PC-3 (cell line): ENCODE measurements at regions of chr2 and their contacts with region 1.

Region 1: DNA sequence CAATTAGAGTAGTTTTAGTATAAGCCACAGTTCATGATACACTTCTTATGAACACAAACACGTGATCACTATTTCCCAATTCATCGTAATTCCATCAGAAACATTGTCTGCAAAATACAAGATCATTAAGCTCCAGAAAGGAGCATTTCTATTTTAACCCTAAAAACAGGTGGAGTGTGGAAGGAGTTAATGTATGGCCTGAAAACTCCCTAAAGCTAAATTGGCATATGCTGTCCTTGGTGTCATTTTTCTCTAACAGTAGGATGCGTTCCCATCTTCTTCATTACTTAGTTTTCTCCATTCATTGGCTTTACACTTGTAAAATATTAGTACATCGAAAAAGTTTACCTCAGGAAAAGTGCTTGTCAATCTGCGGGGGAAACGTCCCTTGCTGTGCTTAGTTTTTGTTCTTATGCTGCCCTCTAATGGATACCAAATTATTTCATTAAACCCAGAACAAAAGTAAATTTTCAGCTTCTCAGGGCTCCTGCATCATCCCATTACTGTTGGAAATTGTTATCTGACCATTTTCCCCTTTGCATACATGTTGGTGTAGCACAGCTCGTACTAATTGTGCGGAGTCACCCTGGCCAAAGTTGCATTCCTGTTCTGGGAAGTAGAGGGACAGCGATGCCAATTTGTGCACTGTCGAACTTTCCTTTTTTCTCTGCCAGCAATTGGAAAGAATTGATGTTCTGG is 153.4 kb downstream of the GPD2 start:
- DNase-seq: peak; percentile 67
- ATAC-seq: peak; percentile 76
- H3K4me3 ChIP-seq: no peak overlapping the region
- H3K27ac ChIP-seq: no peak overlapping the region
- H3K4me1 ChIP-seq: no peaks in the 10 kb centered on the region
- H3K27me3 ChIP-seq: no peaks in the 10 kb centered on the region
- CTCF ChIP-seq: peak; percentile 77

Region 2: GRCh38 chr2:155714983-155715382 is 874.5 kb before region 1 on chr2:
- CTCF ChIA-PET with region 1: no interaction called
- POLR2A ChIA-PET with region 1: no interaction called
- intact Hi-C with region 1: loop called (anchors 1 kb)
- DNase-seq: no peak
- ATAC-seq: peak; percentile 88
- H3K4me3 ChIP-seq: no peak overlapping the region
- H3K27ac ChIP-seq: no peak overlapping the region
- H3K4me1 ChIP-seq: no peaks in the 10 kb centered on the region
- H3K27me3 ChIP-seq: no peaks in the 10 kb centered on the region
- CTCF ChIP-seq: no peak

Region 3: GRCh38 chr2:156110890-156111289 is 478.6 kb before region 1 on chr2:
- CTCF ChIA-PET with region 1: no interaction called
- POLR2A ChIA-PET with region 1: no interaction called
- intact Hi-C with region 1: loop called (anchors 10 kb)
- DNase-seq: peak; percentile 49
- ATAC-seq: peak; percentile 28; the same call in 1 of the 2 replicates
- H3K4me3 ChIP-seq: no peak overlapping the region
- H3K27ac ChIP-seq: no peak overlapping the region
- H3K4me1 ChIP-seq: peaks cover 13% of the 10 kb centered on the region
- H3K27me3 ChIP-seq: no peaks in the 10 kb centered on the region
- CTCF ChIP-seq: peak; percentile 57

Region 4: DNA sequence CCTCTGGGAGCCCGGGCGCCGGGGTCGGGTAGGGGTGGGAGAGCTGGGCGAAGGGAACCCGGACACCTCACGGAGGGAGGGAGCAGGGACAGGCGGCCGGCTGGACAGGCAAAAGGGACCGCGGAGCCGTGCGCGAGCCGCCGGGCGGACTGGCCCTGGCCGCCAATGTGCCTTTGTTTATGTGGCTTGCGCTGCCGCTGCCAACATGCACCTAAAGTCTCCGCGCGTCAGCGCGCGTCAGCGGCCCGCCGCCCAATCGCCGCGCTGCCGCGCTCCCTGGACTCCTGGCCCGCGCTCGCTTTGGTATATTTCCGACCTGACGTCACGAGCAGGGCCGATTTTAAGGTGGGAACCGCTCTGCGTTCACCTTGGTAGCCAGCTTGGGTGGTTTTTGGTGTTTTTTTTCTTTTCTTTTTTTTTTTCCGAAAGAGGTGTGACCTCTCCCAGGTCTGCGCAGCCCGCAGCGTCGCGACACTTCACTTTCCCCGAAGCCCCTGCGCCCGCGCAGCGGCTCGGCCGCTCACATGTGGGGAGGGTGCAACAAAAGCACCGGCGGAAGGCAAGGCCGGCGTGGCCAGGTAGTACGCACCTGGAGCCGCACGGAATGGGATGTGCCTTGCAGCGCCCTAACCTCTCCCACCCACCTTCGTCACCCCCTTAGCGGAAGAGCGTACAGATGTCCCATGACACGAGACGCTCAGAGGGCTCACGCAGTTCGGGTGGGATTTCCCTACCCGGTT is 256.8 kb before region 1 on chr2 and contains the start of gene NR4A2:
- CTCF ChIA-PET with region 1: interaction called, 15 read pairs
- POLR2A ChIA-PET with region 1: interaction called, 5 read pairs
- intact Hi-C with region 1: loop called (anchors 1 kb)
- DNase-seq: peak; percentile 90
- ATAC-seq: peak; percentile 62
- H3K4me3 ChIP-seq: peak within 1 kb of the TSS; percentile 95
- H3K27ac ChIP-seq: peak within 1 kb of the TSS; percentile 97
- H3K4me1 ChIP-seq: peaks cover 14% of the 10 kb centered on the region; the same call in 1 of the 2 replicates
- H3K27me3 ChIP-seq: no peaks in the 10 kb centered on the region
- CTCF ChIP-seq: no peak
- total RNA-seq, gene NR4A2: 12.0 and 13.8 TPM in 2 replicates

Region 5: GRCh38 chr2:156400706-156401678 is 188.5 kb before region 1 on chr2:
- CTCF ChIA-PET with region 1: no interaction called
- POLR2A ChIA-PET with region 1: no interaction called
- intact Hi-C with region 1: loop called (anchors 1 kb)
- DNase-seq: peak; percentile 83
- ATAC-seq: peak; percentile 73
- H3K4me3 ChIP-seq: peak overlapping the region; percentile 74
- H3K27ac ChIP-seq: peak overlapping the region; percentile 91
- H3K4me1 ChIP-seq: peaks cover 21% of the 10 kb centered on the region
- H3K27me3 ChIP-seq: no peaks in the 10 kb centered on the region
- CTCF ChIP-seq: no peak

Region 6: DNA sequence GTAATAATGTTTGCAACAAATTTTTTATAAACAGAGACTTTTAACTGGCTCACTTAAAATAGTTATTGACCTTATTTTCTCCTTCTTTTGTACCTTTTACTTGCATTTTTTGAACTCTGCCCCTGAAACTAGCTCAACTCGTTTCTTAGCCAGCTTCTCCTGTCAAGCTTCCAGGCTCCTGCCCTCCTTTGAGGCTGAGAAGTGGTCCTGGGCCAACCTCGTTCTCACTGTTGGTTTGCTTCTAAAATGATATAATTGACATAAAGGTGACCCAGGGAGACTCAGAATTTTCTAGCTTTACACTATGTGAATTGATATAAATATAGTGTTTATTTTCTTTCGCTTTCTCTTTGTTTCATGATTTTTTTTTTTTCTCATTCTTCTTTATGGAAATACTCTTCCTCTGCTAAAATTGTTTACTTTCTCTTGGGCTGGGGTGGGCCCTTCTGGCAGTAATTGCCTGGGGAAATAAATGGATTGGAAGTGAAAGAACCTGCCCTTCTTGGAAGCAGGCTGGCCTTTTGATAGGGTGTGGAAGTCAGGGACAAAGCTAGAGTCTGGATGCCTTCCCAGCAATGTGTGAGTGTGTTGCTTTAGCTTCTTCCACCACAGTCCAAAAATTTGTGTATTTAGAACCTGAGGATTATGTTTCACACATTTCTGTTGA is 122.7 kb before region 1 on chr2:
- CTCF ChIA-PET with region 1: no interaction called
- POLR2A ChIA-PET with region 1: no interaction called
- intact Hi-C with region 1: loop called (anchors 10 kb)
- DNase-seq: peak; percentile 38
- ATAC-seq: peak; percentile 79
- H3K4me3 ChIP-seq: no peak overlapping the region
- H3K27ac ChIP-seq: peak overlapping the region; percentile 3; the same call in 1 of the 2 replicates
- H3K4me1 ChIP-seq: peaks cover 38% of the 10 kb centered on the region
- H3K27me3 ChIP-seq: no peaks in the 10 kb centered on the region
- CTCF ChIP-seq: no peak

Region 7: DNA sequence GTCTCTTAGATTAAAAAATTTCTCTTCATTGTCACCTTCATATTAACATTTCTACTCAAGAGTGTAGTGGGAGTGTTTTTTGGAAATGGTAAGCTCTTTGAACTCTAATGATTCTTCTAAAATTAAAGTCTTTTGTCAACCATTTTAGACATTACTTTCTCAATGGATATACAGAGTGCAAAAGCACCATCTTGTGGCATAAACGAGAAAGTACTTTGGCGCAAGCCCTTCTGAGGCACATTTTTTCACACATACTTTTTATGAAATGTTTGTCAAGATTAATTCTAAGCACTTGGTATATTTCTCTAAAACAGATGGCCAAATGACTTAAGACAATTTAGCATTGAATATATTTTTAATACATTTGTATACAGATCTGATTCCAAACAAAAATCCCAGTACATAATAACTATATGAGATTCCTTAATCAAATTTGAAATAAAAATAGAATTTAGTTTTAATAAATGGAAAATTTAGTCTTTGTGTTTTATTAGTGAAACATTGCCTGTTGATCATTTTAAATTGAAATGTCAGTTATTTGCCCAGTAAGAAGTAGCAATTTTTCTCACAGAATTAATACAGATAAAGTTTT is 604.7 kb after region 1 on chr2:
- CTCF ChIA-PET with region 1: no interaction called
- POLR2A ChIA-PET with region 1: no interaction called
- intact Hi-C with region 1: loop called (anchors 2 kb)
- DNase-seq: peak; percentile 79
- ATAC-seq: peak; percentile 45
- H3K4me3 ChIP-seq: no peak overlapping the region
- H3K27ac ChIP-seq: no peak overlapping the region
- H3K4me1 ChIP-seq: no peaks in the 10 kb centered on the region
- H3K27me3 ChIP-seq: no peaks in the 10 kb centered on the region
- CTCF ChIP-seq: peak; percentile 89